MCF 10A (cell line): ENCODE measurements at regions of chr4 and their contacts with region 1.

Region 1: DNA sequence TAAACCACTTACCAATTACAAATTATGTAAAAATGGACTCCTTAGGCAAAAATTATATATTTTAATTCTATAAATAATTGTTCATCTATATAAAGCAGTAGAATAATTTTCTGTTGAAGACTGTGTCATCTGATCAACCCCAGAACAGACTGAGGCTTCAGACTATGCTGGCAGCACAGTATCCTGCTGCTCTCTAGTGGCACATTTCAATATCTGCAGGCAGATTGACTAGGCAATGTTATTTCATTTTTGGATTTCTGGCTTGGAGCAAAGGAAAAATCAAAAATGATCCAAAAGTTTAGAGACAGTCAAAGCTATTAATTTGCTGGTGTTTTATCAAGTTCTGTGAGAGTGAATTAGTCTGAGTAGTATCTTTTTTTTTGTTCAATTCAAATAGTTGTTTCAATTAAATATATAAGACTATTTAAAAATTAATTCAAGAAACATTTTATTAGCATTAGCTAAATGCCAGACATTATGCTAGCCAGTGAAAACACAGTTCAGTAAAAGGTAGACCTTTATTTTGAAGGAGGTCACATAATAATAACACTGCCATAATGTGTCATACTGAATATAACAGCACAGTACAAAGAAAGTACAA is 21.3 kb upstream of the SULT1E1 start:
- DNase-seq: peak; percentile 62
- H3K4me3 Mint-ChIP-seq: no peak overlapping the region
- H3K27ac Mint-ChIP-seq: no peak overlapping the region
- H3K4me1 Mint-ChIP-seq: no peaks in the 10 kb centered on the region
- H3K27me3 Mint-ChIP-seq: no peaks in the 10 kb centered on the region
- CTCF ChIP-seq: peak; percentile 91

Region 2: DNA sequence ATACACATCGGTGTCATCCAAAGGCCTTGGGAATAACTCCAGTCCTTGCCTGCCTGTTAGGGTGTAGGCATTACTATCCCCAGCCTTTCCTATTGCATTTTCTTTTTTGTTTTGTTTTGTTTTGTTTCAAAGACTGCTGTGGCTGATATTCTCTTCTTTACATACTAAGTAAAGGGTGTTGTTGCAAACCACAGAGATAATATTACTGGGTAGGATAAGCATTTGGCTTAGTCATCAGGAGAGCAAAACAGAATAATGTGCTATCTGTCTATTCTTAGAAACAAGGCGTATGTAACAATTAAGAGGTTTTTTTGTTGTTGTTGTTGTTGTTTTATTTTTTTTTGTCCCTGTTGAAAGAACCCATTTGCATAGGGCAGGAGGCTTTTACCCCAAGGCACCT is 559.2 kb before region 1 on chr4:
- CTCF ChIA-PET with region 1: interaction called, 16 read pairs
- POLR2A ChIA-PET with region 1: no interaction called
- intact Hi-C with region 1: loop called (anchors 1 kb)
- DNase-seq: peak; percentile 17
- H3K4me3 Mint-ChIP-seq: no peak overlapping the region
- H3K27ac Mint-ChIP-seq: no peak overlapping the region
- H3K4me1 Mint-ChIP-seq: peaks cover 13% of the 10 kb centered on the region
- H3K27me3 Mint-ChIP-seq: no peaks in the 10 kb centered on the region
- CTCF ChIP-seq: no peak

Region 3: DNA sequence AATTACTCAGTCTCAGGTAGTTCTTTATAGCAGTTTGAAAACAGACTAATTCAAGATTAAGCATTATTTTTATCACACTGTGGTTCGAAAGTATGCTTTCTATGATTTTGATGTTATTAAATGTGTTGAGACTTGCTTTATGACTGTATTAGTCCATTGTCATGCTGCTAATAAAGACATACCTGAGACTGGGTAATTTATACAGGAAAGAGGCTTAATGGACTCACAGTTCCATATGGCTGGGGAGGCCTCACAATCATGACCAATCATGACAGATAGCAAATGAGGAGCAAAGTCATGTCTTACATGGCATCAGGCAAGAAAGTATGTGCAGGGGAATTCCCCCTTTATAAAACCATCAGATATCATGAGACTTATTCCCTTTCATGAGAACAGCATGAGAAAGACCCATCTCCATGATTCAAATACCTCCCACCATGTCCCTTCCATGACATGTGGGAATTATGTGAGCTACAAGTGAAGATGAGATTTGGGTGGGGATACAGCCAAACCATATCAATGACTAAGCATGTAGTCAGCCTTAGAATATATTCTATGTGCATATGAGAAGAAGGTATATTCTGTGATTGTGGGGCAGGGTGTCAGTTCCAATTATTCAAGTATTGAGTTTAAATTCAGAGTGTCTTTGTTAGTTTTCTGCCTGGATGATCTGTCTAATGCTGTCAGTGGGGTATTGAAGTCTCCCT is 183.6 kb before region 1 on chr4:
- CTCF ChIA-PET with region 1: interaction called, 15 read pairs
- POLR2A ChIA-PET with region 1: interaction called, 3 read pairs
- intact Hi-C with region 1: no loop called
- DNase-seq: no peak
- H3K4me3 Mint-ChIP-seq: no peak overlapping the region
- H3K27ac Mint-ChIP-seq: no peak overlapping the region
- H3K4me1 Mint-ChIP-seq: no peaks in the 10 kb centered on the region
- H3K27me3 Mint-ChIP-seq: no peaks in the 10 kb centered on the region
- CTCF ChIP-seq: no peak

Region 4: GRCh38 chr4:69858690-69859089 is 22.6 kb before region 1 on chr4:
- CTCF ChIA-PET with region 1: interaction called, 16 read pairs
- POLR2A ChIA-PET with region 1: interaction called, 5 read pairs
- intact Hi-C with region 1: no loop called
- DNase-seq: peak; percentile 81
- H3K4me3 Mint-ChIP-seq: no peak overlapping the region
- H3K27ac Mint-ChIP-seq: no peak overlapping the region
- H3K4me1 Mint-ChIP-seq: no peaks in the 10 kb centered on the region
- H3K27me3 Mint-ChIP-seq: no peaks in the 10 kb centered on the region
- CTCF ChIP-seq: no peak

Region 5: GRCh38 chr4:70183168-70183939 is 302.1 kb after region 1 on chr4:
- CTCF ChIA-PET with region 1: interaction called, 5 read pairs
- POLR2A ChIA-PET with region 1: no interaction called
- intact Hi-C with region 1: loop called (anchors 5 kb)
- DNase-seq: peak; percentile 62
- H3K4me3 Mint-ChIP-seq: no peak overlapping the region
- H3K27ac Mint-ChIP-seq: no peak overlapping the region
- H3K4me1 Mint-ChIP-seq: no peaks in the 10 kb centered on the region
- H3K27me3 Mint-ChIP-seq: peaks cover 90% of the 10 kb centered on the region
- CTCF ChIP-seq: peak; percentile 54